Thyroid gland (tissue), 4 donors: ENCODE measurements at regions of chr5 and their contacts with region 1.

Region 1: DNA sequence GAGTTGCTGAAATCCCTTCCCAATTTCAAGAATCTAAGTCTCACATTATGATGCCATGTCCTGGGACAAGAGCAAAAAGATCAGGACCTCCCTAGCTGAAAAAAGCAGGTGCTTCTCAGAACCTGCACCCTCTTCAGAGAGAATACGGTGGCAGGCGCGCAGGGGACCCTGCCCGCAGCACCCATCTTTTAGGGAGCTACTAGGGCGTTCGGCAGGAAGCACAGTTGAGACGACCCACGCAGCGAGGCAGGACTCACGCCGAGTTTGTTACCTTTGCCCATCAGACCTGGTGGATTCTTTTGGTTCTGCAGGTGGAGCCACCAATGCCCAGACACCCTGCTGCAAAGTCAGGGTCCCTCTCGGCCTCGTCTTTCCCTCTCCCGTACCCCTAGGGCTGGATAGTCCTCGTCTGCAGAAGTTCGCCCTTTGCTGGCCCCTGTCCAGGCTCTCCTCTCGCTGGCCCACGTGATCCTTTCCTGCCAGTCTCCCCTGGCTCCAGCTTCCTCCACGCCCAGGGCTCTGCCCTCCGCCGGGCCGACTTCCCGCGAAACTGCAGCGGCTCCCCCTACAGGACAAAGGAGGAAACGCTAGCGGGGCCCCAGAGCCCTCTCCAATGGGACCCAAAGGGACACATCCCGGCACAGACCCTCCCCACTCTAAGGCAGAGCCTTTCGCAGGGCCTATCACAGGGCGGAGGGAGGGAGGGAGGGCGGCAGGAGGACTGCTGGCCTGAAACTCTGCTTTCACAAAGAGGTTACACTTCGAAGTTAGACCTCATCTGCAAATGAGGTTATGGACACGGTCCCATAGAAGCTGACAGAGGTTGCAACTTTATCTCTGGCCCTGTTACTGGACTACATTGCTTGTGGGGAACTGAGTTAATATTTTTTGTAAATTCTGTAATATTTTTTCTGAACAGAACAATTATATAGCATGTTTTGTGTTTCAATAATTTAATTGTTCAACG is 28.8 kb downstream of the TMEM174 start:
- DNase-seq: peak; percentile 94 to 96
- H3K4me3 ChIP-seq: peak overlapping the region in 1 of 3 donors; percentile 17
- H3K27ac ChIP-seq: no peak overlapping the region
- H3K4me1 ChIP-seq: peaks cover 0 to 8% of the 10 kb centered on the region in 2 donors
- H3K27me3 ChIP-seq: no peaks in the 10 kb centered on the region
- CTCF ChIP-seq: peak; percentile 81 to 96 (median 90)
- POLR2A ChIP-seq: no peak

Region 2: GRCh38 chr5:73031839-73032238 is 170.0 kb before region 1 on chr5:
- intact Hi-C with region 1: no loop called
- DNase-seq: peak; percentile 91 to 94
- H3K4me3 ChIP-seq: no peak overlapping the region
- H3K27ac ChIP-seq: peak overlapping the region; percentile 35 to 61 (median 54)
- H3K4me1 ChIP-seq: peaks cover 15 to 25% of the 10 kb centered on the region in 2 donors
- H3K27me3 ChIP-seq: no peaks in the 10 kb centered on the region
- CTCF ChIP-seq: no peak
- POLR2A ChIP-seq: no peak

Region 3: DNA sequence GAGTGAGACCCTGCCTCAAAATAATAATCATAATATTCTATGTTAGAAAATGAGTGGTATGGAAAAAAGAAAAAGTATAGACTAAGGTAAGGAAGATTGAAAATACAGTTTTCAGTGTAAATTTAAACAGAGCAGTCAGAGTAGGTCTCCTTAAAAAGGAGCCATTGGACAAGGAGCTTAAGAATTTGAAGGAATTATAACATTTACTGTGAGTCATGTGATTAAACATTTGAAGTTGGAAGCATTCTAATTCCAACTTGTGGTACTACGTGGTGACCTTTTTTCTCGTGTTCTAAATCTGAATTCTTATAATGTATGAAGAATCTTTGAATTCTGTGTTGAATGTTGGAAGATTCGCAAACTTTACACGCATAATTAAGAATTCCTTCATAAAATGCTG is 120.7 kb before region 1 on chr5:
- intact Hi-C with region 1: loop called (anchors 5 kb)
- DNase-seq: no peak
- H3K4me3 ChIP-seq: no peak overlapping the region
- H3K27ac ChIP-seq: no peak overlapping the region
- H3K4me1 ChIP-seq: peaks cover 0 to 10% of the 10 kb centered on the region in 2 donors
- H3K27me3 ChIP-seq: no peaks in the 10 kb centered on the region
- CTCF ChIP-seq: no peak
- POLR2A ChIP-seq: no peak